H1 (cell line): ENCODE measurements at regions of chr15 and their contacts with region 1.

Region 1: DNA sequence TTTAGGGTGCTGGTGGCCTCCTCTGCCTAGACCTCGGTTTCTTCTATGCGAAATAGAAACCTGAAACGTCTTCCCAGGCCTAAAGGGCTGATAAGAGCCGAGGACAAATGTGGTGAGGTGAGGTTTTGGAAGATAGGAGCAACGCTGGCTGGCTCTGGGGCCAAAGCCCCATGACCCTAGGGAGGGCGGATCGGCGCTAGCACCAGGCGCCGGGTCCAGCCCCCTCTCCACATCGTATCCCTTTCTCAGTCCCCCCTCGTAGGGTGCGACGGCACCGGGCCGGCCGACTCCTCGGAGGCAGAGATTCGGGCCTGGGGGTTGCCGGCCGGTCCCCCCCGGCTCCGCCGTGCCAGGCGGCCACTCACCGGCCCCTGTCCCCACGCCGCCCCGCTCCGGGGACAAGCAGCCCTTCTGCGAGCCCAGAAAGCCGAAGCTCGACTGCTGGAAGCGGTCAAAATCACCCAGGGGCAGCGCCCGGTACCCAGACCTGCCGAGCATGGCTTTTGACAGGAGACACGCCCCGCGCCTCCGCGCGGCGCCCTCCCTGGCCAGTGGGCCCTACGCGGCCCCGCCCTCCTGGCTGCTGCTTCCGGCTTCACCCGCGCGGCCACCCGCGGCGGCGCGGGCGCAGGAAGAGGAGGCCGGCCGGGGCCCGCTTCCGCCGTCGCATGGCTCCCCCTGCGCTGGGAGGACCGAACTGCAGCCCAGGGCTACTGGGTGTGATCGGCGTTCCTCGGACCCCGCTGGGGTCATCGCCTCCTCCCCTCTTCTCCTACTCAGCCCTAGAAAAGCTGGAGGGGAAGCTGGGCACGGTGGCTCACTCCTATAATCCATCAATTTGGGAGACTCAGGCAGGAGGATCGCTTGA is at the start of gene STOML1:
- DNase-seq: peak; percentile 71 to 100
- H3K4me3 ChIP-seq: peak within 1 kb of the TSS; percentile 33 to 90 (median 62)
- H3K27ac ChIP-seq: no peak within 1 kb of the TSS
- H3K4me1 ChIP-seq: peaks cover 0 to 7% (median under 1%) of the 10 kb centered on the region in 4 experiments; a peak in 3 of 7 replicates
- H3K27me3 ChIP-seq: peaks cover 0 to 8% (median 1%) of the 10 kb centered on the region in 4 experiments; a peak in 1 of 7 replicates
- CTCF ChIP-seq: peak; percentile 87 to 89 (median 89)
- EP300 ChIP-seq: no peak; a peak in 1 of 3 replicates
- POLR2A ChIP-seq: peak in 1 of 2 experiments; percentile 30; a peak in 1 of 3 replicates
- RAD21 ChIP-seq: 0 out of 4 replicates have a peak, but pooled peaks of 1 of the 2 experiments have one; percentile 15
- total RNA-seq, gene STOML1: 2.6 and 3.8 TPM in 2 replicates

Region 2: GRCh38 chr15:73922186-73923151 is 69.5 kb before region 1 on chr15:
- CTCF ChIA-PET with region 1: no interaction called
- POLR2A ChIA-PET with region 1: no interaction called
- DNase-seq: peak in 1 of 2 experiments; percentile 74
- H3K4me3 ChIP-seq: peak overlapping the region in 1 of 4 experiments; percentile 47; a peak in 3 of 8 replicates
- H3K27ac ChIP-seq: no peak overlapping the region; the same call in 1 of the 2 replicates
- H3K4me1 ChIP-seq: peaks cover 0 to 51% (median 33%) of the 10 kb centered on the region in 4 experiments; a peak in 6 of 7 replicates
- H3K27me3 ChIP-seq: peaks cover 0 to 6% (median 2%) of the 10 kb centered on the region in 4 experiments; a peak in 3 of 7 replicates
- CTCF ChIP-seq: no peak
- EP300 ChIP-seq: no peak
- POLR2A ChIP-seq: no peak
- RAD21 ChIP-seq: no peak

Region 3: GRCh38 chr15:74011610-74012009 is 19.6 kb after region 1 on chr15:
- CTCF ChIA-PET with region 1: interaction called, 20 read pairs
- POLR2A ChIA-PET with region 1: interaction called, 3 read pairs
- DNase-seq: no peak
- H3K4me3 ChIP-seq: no peak overlapping the region
- H3K27ac ChIP-seq: no peak overlapping the region
- H3K4me1 ChIP-seq: no peaks in the 10 kb centered on the region
- H3K27me3 ChIP-seq: no peaks in the 10 kb centered on the region
- CTCF ChIP-seq: no peak
- EP300 ChIP-seq: no peak
- POLR2A ChIP-seq: no peak
- RAD21 ChIP-seq: no peak

Region 4: DNA sequence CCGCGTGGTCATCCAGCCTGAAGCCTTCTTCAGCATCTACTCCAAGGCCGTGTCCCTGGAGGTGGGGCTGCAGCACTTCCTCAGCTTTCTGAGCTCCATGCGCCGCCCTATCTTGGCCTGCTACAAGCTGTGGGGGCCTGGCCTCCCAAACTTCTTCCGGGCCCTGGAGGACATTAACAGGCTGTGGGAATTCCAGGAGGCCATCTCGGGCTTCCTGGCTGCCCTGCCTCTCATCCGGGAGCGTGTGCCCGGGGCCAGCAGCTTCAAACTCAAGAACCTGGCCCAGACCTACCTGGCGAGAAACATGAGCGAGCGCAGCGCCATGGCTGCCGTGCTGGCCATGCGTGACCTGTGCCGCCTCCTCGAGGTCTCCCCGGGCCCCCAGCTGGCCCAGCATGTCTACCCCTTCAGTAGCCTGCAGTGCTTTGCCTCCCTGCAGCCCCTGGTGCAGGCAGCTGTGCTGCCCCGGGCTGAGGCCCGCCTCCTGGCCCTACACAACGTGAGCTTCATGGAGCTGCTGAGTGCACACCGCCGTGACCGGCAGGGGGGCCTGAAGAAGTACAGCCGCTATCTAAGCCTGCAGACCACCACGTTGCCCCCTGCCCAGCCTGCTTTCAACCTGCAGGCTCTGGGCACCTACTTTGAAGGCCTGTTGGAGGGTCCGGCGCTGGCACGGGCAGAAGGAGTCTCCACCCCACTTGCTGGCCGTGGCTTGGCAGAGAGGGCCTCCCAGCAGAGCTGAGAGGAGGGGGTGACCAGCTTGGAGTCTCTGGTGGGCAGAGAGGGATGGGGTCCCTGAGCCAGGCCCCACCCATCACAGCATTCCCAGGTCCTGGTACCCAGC is 52.5 kb after region 1 on chr15:
- CTCF ChIA-PET with region 1: interaction called, 56 read pairs
- POLR2A ChIA-PET with region 1: no interaction called
- DNase-seq: no peak
- H3K4me3 ChIP-seq: no peak overlapping the region
- H3K27ac ChIP-seq: no peak overlapping the region
- H3K4me1 ChIP-seq: peaks cover 0 to 5% (median 3%) of the 10 kb centered on the region in 4 experiments; a peak in 5 of 7 replicates
- H3K27me3 ChIP-seq: peaks cover 0 to under 1% (median 0%) of the 10 kb centered on the region in 4 experiments; a peak in 1 of 7 replicates
- CTCF ChIP-seq: no peak
- EP300 ChIP-seq: no peak
- POLR2A ChIP-seq: no peak
- RAD21 ChIP-seq: no peak